ENCODE measurements at regions of chr6 and their contacts with region 1.

Region 1: DNA sequence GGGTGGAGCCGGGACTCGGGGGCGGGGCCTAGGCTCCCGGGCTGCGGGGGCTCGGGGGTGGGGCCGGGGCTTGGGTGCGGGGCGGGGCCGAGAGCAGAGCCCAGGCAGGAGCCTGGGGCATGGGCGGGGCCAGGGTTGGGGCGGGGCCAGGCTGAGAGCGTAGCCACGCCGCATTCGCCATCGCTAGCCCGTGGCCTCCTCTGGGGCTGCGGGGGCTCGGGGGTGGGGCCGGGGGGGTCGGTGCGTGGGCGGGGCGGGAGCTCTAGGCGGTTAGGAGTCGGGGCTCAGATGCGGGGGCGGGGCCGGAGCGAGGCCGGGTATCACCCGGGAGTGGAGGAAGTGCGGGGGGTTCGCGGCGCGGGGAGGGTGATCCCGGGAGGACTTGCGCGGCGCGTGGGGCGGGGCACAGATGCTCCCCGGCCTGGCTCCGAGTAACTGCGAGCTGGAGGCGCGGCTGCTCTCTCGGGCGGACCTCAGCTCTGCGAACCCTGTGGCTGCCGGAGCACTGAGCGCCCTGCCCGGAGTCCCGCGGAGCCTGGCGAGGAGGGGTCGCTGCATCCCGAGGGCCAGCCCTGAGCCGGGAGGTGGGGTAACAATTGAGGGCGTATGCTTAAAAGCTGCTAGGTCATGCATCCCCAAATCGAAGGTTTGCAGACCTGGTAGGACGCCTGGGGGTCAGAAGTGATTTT is 434 bp upstream of the ECI2 start:
- DNase-seq: peak; percentile 94 to 100 (median 98)

Region 2: DNA sequence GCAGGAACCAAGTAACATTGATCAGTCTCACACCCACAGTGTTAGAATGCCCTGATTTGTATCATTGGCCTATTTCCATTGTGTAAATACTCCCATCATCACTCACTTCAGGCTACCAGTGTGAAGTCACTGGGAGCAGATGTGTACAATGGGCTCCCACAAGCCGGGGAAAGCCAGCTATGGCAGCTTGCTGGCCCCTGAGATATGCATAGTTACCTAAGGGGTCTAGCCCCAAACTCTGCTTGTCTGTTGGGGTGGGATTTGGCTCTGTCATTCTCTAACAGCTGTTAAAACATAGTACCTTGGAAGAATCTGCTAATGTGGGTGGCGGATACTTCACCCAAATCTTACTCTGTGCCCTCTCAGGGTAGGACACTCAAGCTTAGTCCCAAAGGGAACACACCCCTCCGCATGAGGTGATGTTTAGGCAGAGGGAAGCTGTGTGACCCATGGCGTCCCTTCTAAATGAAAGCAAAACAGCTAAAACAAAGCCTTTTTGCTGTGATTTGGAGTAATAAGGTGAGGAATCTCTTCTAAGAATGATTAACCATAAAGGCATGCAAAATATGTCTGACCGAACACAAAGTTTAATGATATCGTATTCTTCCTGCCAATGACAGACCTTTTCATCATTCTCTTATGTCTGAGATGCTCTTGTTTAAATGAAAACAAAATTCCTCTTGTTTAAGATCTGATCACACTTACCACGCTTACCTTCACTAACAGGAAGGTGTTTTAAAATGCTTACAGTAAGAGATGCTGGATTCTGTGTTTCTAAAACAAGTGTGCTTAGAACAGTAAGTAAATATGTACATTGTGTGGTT is 338.4 kb before region 1 on chr6:
- intact Hi-C with region 1: no loop called
- DNase-seq: no peak

Region 3: DNA sequence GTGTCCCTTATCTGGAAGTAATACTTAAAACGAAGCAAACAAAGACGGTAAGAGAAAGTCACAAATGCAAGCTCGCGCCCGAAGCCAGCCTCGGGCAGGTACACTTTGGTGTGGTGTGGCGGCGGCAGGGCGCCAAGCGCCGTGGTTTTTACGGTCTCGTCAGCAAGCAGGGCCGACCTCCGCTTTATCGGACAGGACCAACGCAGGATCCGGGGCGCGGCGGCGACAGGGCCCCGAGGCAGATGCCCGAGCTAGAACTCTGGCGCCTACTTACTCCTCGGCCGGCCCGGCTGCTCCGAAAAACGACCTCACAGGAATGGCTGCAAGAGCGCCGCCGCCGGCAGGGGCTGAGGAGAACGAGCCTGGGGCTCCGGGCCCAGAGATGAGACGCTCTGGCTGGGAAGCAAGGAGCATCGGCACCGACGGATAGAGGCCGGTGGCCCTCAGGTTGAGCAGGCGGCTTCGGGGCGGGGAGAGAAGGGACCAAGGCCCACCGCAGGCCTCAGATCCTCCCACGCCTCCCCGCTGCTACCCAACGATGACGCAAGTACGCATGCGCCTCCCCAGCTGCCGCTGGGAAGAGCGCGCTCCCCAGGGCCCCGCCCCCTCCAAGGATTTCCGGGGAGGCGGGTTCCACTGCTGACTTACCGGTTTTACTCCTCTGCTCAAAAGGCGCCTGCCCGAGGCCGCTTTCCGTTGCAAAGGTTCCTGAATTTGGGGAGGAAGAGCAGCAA is 117.5 kb before region 1 on chr6:
- intact Hi-C with region 1: loop called (anchors 2 kb)
- DNase-seq: peak; percentile 78 to 98 (median 95)

Measured in head of caudate nucleus (tissue), 42 donors.